Psoas muscle (tissue), 8 donors: ENCODE measurements at regions of chrX and their contacts with region 1.

Region 1: GRCh38 chrX:141815904-141816303 is 22.2 kb upstream of the MAGEC3 start:
- DNase-seq: no peak
- ATAC-seq: no peak
- H3K4me3 ChIP-seq: no peak overlapping the region
- H3K27ac ChIP-seq: no peak overlapping the region
- H3K4me1 ChIP-seq: no peaks in the 10 kb centered on the region
- H3K27me3 ChIP-seq: no peaks in the 10 kb centered on the region
- CTCF ChIP-seq: no peak

Region 2: DNA sequence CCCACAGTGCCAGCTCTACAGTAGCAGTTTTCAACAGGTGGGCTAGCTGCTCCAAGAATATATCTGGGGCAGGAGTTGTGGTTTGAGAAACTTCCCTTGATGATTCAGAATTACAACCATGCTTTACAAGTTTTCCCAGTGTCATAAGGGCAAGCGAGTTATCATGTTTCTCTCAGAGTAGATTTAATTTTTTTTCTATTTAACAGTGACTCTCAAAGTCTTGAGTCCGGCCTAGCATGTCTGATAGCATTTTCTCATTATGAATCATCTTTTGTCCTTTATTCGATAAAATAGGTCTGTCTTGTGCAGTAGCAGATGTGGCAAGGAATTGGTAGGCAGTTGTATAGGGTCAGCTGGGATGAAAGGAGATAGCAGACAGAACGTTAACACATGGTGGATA is 55.1 kb before region 1 on chrX:
- intact Hi-C with region 1: loop called in 1 of 2 experiments (anchors 10 kb)
- DNase-seq: no peak
- ATAC-seq: no peak
- H3K4me3 ChIP-seq: no peak overlapping the region
- H3K27ac ChIP-seq: no peak overlapping the region
- H3K4me1 ChIP-seq: no peaks in the 10 kb centered on the region
- H3K27me3 ChIP-seq: no peaks in the 10 kb centered on the region
- CTCF ChIP-seq: no peak